Activated CD4-positive, alpha-beta memory T cell treated with anti-CD3 and anti-CD28 coated beads, Interleukin-2, amount 10 ng/mL, durations not matched to agents 7 days and 5 days (primary cell): ENCODE measurements at regions of chr2 and their contacts with region 1.

Region 1: DNA sequence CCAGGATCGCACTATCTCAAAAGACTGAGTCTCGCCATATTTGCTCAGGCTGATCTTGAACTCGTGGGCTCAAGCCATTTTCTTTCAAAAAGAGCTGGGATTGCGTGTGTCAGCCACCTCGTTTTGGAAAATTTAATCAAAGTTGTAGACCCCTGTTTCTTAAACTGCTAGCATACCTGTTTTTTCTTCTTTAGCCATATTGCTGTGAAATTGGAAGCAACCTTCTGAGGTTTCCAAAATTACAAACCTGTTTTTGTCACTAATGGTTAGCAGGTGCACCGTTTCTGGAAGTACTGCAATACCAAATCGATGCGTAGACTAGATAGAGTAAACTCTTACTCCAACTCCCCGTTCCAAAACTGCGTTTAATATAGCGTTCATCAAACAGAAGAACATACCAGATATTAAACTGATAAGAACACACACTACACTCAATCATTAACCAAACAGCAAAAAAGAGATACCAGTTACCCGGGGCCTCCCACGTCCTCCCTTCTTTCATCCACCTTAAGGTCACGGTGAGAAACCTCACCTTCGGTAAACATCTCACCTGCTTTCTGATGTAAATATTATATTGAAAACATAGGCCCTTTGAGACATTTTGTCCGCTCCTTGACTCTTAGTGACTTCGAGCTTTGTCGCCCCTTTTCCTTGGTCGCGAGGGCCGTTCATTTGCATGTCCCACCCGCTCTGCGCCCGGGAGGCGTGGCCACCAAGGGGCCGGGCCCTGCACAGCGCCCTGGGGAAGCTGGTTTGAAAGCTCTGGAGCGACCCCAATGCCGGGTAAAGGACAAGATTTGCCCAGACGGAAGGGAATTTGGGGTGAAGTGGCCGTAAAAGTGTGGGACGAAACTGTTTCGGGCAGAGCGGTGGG is at the start of gene RNU2-63P:
- DNase-seq: peak; percentile 77
- H3K4me3 Mint-ChIP-seq: peak within 1 kb of the TSS; percentile 97
- H3K27ac Mint-ChIP-seq: peak within 1 kb of the TSS; percentile 94
- H3K4me1 Mint-ChIP-seq: peaks cover 21% of the 10 kb centered on the region
- H3K27me3 Mint-ChIP-seq: no peaks in the 10 kb centered on the region
- total RNA-seq, gene RNU2-63P: 14.6 to 16.1 TPM

Region 2: GRCh38 chr2:88027697-88028389 is 11.5 kb after region 1 on chr2:
- CTCF ChIA-PET with region 1: no interaction called
- POLR2A ChIA-PET with region 1: interaction called, 23 read pairs
- DNase-seq: no peak
- H3K4me3 Mint-ChIP-seq: no peak overlapping the region
- H3K27ac Mint-ChIP-seq: peak overlapping the region; percentile 32
- H3K4me1 Mint-ChIP-seq: peaks cover 5% of the 10 kb centered on the region
- H3K27me3 Mint-ChIP-seq: no peaks in the 10 kb centered on the region

Region 3: DNA sequence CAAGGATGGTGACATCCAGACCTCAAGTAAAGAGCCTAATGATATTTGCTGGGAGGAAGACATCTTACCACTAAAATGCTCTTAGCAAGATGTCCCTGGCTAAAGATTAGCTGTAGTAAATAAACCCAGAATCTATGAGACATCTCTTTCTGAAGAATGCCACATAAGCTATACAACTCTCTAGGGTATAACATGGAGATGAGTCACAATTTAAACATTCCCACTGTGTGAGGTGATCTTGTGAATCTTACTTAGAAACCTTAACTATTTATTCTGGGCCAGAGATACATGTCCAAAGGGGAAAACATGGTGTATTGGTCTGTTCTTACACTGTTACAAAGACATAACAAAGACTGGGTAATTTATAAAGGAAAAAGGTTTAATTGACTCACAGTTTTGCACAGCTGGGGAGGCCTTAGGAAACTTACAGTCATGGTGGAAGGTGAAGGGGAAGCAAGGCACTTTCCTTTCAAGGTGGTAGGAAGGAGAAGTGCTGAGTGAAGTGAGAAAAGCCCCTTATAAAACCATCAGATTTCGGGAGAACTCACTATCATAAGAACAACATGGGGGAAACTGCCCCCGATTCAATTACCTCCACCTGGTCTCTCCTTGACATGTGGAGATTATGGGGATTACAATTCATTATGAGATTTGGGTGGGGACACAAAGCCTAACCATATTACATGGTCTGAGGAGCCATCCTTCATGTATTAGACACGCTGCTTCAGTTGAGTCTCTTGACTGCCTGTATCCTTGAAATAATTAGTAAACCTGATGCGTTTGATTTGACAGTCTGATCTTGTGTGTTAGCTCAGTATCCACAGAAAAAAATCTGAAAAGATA is 22.2 kb after region 1 on chr2:
- CTCF ChIA-PET with region 1: interaction called, 3 read pairs
- POLR2A ChIA-PET with region 1: interaction called, 13 read pairs
- DNase-seq: no peak
- H3K4me3 Mint-ChIP-seq: no peak overlapping the region
- H3K27ac Mint-ChIP-seq: no peak overlapping the region
- H3K4me1 Mint-ChIP-seq: peaks cover 3% of the 10 kb centered on the region
- H3K27me3 Mint-ChIP-seq: no peaks in the 10 kb centered on the region

Region 4: GRCh38 chr2:88144914-88145497 is 128.7 kb after region 1 on chr2:
- CTCF ChIA-PET with region 1: no interaction called
- POLR2A ChIA-PET with region 1: no interaction called
- DNase-seq: no peak
- H3K4me3 Mint-ChIP-seq: no peak overlapping the region
- H3K27ac Mint-ChIP-seq: no peak overlapping the region
- H3K4me1 Mint-ChIP-seq: no peaks in the 10 kb centered on the region
- H3K27me3 Mint-ChIP-seq: peaks cover 23% of the 10 kb centered on the region

Region 5: DNA sequence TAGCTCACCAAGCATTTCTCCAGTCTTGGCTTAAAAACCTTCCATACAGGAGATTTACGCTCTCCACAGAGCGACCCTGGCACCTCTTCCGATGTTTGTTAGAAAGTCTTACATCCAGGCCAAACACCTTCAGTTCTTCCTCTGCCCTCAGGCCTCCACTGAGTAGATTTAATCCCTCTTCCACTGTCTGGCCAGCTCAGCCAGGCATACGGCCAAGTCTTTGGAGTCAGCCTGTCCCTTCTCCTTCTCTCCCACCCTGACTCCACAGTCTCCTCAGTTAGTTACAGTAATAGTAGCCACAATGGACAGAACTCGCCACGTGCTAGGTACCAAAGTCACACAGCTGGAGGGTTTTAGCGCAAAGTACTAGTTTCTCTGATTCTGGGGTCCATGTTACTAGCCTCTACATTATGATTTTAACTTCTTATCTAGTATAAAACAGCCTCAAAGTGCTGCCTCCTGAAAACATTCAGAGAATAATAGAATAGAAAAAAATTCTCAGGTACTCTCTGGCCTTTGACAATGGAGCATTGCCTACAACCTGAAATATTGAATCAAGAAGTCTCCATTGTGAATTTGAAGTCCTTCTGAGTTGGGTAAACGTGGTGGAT is 193.3 kb after region 1 on chr2:
- CTCF ChIA-PET with region 1: no interaction called
- POLR2A ChIA-PET with region 1: no interaction called
- DNase-seq: no peak
- H3K4me3 Mint-ChIP-seq: no peak overlapping the region
- H3K27ac Mint-ChIP-seq: no peak overlapping the region
- H3K4me1 Mint-ChIP-seq: no peaks in the 10 kb centered on the region
- H3K27me3 Mint-ChIP-seq: peaks cover 12% of the 10 kb centered on the region

Region 6: GRCh38 chr2:88220718-88221117 is 204.4 kb after region 1 on chr2:
- CTCF ChIA-PET with region 1: no interaction called
- POLR2A ChIA-PET with region 1: no interaction called
- DNase-seq: no peak
- H3K4me3 Mint-ChIP-seq: no peak overlapping the region
- H3K27ac Mint-ChIP-seq: no peak overlapping the region
- H3K4me1 Mint-ChIP-seq: no peaks in the 10 kb centered on the region
- H3K27me3 Mint-ChIP-seq: peaks cover 17% of the 10 kb centered on the region